Caco-2 (cell line): ENCODE measurements at regions of chr10 and their contacts with region 1.

Region 1: DNA sequence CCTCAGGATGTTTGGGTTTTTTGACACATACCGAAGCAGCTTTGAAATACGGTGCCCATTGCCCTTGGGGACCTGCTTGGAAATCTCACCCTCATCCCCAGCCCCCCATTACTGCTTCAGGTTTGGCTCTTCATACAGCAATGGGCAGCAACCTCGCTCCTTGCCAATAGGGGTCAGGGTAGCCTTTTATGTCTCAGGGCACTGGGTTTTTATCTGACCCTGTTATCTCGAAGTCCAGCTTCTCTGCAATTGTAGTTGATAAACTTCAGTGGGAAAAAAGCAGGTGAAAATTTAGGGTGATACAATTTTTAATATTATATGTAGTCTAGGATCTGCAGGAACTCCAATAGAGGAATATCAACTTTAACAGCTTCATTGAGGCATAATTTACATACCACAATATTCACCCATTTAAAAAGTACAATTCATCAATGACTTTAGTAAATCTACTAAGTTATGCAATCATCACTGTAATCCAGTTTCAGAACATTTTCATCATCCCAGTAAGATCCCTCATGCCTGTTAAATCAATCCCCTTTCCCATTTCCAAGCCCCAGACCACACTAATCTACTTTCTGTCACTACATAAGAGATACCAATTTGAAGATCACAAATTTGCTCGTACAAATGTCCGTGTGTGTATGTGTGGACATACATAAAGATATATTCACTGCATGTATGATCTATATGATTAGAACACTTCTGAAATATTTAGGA is 386.2 kb downstream of the KCNMA1 start:
- DNase-seq: peak; percentile 63 to 74
- H3K4me3 ChIP-seq: no peak overlapping the region
- H3K4me3 Mint-ChIP-seq: no peak overlapping the region
- H3K27ac Mint-ChIP-seq: no peak overlapping the region
- H3K4me1 ChIP-seq: peaks cover 53% of the 10 kb centered on the region
- H3K4me1 Mint-ChIP-seq: peaks cover 43% of the 10 kb centered on the region
- H3K27me3 ChIP-seq: no peaks in the 10 kb centered on the region
- H3K27me3 Mint-ChIP-seq: no peaks in the 10 kb centered on the region
- CTCF ChIP-seq: peak; percentile 88 to 89

Region 2: DNA sequence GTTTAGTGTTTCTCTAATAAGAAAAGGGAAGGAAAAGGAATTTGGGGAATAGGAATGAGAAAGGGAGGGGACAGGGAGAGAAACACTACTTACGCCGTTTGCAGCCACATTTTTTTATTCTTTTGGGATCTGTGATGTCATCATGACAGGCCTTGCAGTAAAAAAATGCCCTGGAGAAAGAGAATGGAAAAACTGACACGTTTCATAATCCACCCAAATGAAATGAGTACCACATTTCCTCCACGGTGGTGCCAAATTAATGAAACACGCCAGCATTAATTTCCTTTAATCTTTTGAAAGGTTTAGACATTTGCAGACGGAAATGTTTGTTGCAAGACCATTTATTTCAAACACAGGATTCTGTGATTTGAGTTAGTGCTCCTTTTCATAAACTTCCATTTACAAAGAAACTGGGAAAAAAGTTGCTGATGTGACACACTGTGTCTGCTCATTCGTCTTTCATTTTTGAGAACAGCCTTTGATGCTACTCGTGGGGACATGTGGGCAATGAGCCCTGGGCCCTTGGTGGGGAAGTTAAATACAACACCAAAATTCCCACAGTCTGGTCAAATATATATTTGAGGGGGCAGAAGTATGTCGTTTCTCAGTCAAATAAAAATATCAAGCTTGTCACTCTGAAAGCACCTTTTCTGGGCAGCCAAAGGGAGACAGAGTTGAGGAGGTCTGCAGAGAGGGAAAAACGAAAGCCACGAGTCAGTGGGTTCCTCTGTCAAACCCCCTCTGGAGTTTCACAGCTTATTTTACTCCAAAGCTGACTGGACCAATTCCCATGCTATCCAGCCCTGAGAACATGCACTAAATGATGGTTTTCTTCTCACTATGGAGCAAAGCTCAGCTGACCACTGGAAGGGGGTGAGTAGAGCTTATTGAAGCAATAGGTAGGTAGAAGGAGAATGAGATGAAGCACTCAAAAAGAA is 239.3 kb before region 1 on chr10:
- CTCF ChIA-PET with region 1: no interaction called
- POLR2A ChIA-PET with region 1: no interaction called
- intact Hi-C with region 1: no loop called
- DNase-seq: no peak
- H3K4me3 ChIP-seq: no peak overlapping the region
- H3K4me3 Mint-ChIP-seq: no peak overlapping the region
- H3K27ac Mint-ChIP-seq: no peak overlapping the region
- H3K4me1 ChIP-seq: no peaks in the 10 kb centered on the region
- H3K4me1 Mint-ChIP-seq: no peaks in the 10 kb centered on the region
- H3K27me3 ChIP-seq: no peaks in the 10 kb centered on the region
- H3K27me3 Mint-ChIP-seq: peaks cover 11% of the 10 kb centered on the region
- CTCF ChIP-seq: no peak

Region 3: DNA sequence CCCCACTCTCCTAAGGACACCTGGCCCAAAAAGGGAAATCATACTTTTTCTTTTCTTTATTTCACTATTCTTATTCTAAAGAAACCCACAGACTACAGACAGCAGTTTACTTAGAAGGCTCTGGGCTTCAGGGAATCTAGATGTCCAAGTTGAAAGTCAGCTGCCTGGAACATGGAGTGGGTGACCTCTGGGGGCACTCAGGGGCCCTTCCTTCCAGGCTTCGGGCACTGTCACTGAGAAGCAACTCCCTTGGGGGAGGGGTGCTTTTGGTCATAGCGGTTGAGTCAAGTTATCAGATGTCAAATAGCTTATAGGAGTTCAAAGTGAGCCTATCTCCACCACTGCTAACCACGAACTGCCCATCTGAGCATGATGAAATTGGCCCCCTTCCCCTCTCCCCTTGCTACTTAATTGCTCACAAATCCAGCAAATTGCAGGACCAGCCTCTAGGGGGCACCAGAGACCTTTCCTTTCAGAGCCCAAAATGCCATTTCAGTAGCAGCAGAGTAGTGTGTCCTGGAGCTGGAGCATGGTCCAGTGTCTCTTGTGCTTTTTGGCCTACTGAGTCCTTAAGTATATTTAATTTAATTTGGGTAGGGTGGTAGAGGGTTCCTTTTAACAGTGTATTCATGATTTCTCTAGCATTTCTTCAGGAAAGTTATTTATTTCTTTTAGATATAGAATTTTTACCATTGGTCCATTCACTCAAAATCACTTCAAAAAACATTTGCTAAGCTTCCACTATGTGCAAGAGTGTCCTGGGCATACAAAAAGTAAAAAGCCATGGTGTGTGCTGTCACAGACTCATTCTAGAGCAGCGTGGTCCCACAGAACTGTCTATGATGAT is 77.6 kb before region 1 on chr10:
- CTCF ChIA-PET with region 1: interaction called, 13 read pairs
- POLR2A ChIA-PET with region 1: no interaction called
- intact Hi-C with region 1: loop called (anchors 1 kb)
- DNase-seq: peak; percentile 75 to 87
- H3K4me3 ChIP-seq: no peak overlapping the region
- H3K4me3 Mint-ChIP-seq: no peak overlapping the region
- H3K27ac Mint-ChIP-seq: no peak overlapping the region
- H3K4me1 ChIP-seq: no peaks in the 10 kb centered on the region
- H3K4me1 Mint-ChIP-seq: no peaks in the 10 kb centered on the region
- H3K27me3 ChIP-seq: no peaks in the 10 kb centered on the region
- H3K27me3 Mint-ChIP-seq: no peaks in the 10 kb centered on the region
- CTCF ChIP-seq: peak; percentile 84 to 94

Region 4: GRCh38 chr10:77274046-77274795 is 22.8 kb after region 1 on chr10:
- CTCF ChIA-PET with region 1: no interaction called
- POLR2A ChIA-PET with region 1: no interaction called
- intact Hi-C with region 1: loop called (anchors 2 kb)
- DNase-seq: peak in 1 of 2 experiments; percentile 35
- H3K4me3 ChIP-seq: no peak overlapping the region
- H3K4me3 Mint-ChIP-seq: no peak overlapping the region
- H3K27ac Mint-ChIP-seq: no peak overlapping the region
- H3K4me1 ChIP-seq: peaks cover 35% of the 10 kb centered on the region
- H3K4me1 Mint-ChIP-seq: peaks cover 29% of the 10 kb centered on the region
- H3K27me3 ChIP-seq: no peaks in the 10 kb centered on the region
- H3K27me3 Mint-ChIP-seq: no peaks in the 10 kb centered on the region
- CTCF ChIP-seq: no peak

Region 5: DNA sequence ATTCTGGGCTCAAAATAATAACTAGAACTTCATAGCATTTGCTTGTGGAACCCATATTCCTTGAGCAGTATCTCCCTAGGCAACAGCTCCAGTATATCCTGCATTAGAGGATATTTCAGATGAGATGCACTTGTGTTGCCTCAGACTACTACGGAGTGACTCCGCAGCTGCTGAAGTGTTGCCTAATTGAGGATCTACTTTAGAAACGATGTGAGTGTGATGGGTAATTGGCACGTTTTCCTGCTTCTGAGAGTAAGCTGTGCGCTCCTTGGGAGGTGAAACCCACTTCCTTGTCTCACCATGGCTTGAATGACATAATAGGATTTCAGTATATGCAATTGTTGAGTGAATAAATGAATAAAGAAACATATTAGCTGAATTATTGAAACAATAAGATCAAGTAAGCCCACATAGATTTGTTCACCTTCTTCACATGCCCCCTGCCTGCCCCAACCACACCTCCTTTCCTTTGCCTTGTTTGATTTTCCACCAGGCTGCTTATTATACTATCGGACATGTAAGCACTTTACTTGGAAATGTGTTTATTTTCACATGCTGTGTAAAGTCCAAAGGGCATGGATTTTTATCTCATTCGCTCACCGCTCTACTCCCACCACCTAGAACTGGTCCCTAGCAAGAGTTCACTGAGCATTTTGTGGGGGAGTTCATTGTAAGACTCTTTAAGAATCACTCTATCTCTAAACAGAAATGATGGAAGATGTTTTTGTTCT is 82.3 kb after region 1 on chr10:
- CTCF ChIA-PET with region 1: interaction called, 3 read pairs
- POLR2A ChIA-PET with region 1: no interaction called
- intact Hi-C with region 1: loop called (anchors 1 kb)
- DNase-seq: peak; percentile 73 to 79
- H3K4me3 ChIP-seq: no peak overlapping the region
- H3K4me3 Mint-ChIP-seq: peak overlapping the region; percentile 58
- H3K27ac Mint-ChIP-seq: peak overlapping the region; percentile 91
- H3K4me1 ChIP-seq: peaks cover 51% of the 10 kb centered on the region
- H3K4me1 Mint-ChIP-seq: peaks cover 57% of the 10 kb centered on the region
- H3K27me3 ChIP-seq: no peaks in the 10 kb centered on the region
- H3K27me3 Mint-ChIP-seq: no peaks in the 10 kb centered on the region
- CTCF ChIP-seq: no peak

Region 6: GRCh38 chr10:77391605-77392235 is 140.3 kb after region 1 on chr10:
- CTCF ChIA-PET with region 1: no interaction called
- POLR2A ChIA-PET with region 1: no interaction called
- intact Hi-C with region 1: loop called (anchors 1 kb)
- DNase-seq: peak; percentile 79 to 81
- H3K4me3 ChIP-seq: no peak overlapping the region
- H3K4me3 Mint-ChIP-seq: no peak overlapping the region
- H3K27ac Mint-ChIP-seq: no peak overlapping the region
- H3K4me1 ChIP-seq: peaks cover 50% of the 10 kb centered on the region
- H3K4me1 Mint-ChIP-seq: peaks cover 40% of the 10 kb centered on the region
- H3K27me3 ChIP-seq: no peaks in the 10 kb centered on the region
- H3K27me3 Mint-ChIP-seq: no peaks in the 10 kb centered on the region
- CTCF ChIP-seq: peak; percentile 42 to 65

Region 7: GRCh38 chr10:77485847-77486246 is 234.4 kb after region 1 on chr10:
- CTCF ChIA-PET with region 1: no interaction called
- POLR2A ChIA-PET with region 1: no interaction called
- intact Hi-C with region 1: loop called (anchors 5 kb)
- DNase-seq: peak; percentile 67 to 70
- H3K4me3 ChIP-seq: no peak overlapping the region
- H3K4me3 Mint-ChIP-seq: no peak overlapping the region
- H3K27ac Mint-ChIP-seq: no peak overlapping the region
- H3K4me1 ChIP-seq: peaks cover 23% of the 10 kb centered on the region
- H3K4me1 Mint-ChIP-seq: peaks cover 14% of the 10 kb centered on the region
- H3K27me3 ChIP-seq: no peaks in the 10 kb centered on the region
- H3K27me3 Mint-ChIP-seq: no peaks in the 10 kb centered on the region
- CTCF ChIP-seq: no peak